Right ventricle myocardium superior (tissue), 1 donor: ENCODE measurements at regions of chr7 and their contacts with region 1.

Region 1: GRCh38 chr7:86939197-86939814 is 120.1 kb downstream of the ELAPOR2 start:
- DNase-seq: no peak
- ATAC-seq: peak; percentile 71

Region 2: GRCh38 chr7:86485827-86486226 is 453.5 kb before region 1 on chr7:
- intact Hi-C with region 1: no loop called
- DNase-seq: no peak
- ATAC-seq: no peak

Region 3: GRCh38 chr7:86968618-86969017 is 29.3 kb after region 1 on chr7:
- intact Hi-C with region 1: no loop called
- DNase-seq: no peak
- ATAC-seq: no peak

Region 4: DNA sequence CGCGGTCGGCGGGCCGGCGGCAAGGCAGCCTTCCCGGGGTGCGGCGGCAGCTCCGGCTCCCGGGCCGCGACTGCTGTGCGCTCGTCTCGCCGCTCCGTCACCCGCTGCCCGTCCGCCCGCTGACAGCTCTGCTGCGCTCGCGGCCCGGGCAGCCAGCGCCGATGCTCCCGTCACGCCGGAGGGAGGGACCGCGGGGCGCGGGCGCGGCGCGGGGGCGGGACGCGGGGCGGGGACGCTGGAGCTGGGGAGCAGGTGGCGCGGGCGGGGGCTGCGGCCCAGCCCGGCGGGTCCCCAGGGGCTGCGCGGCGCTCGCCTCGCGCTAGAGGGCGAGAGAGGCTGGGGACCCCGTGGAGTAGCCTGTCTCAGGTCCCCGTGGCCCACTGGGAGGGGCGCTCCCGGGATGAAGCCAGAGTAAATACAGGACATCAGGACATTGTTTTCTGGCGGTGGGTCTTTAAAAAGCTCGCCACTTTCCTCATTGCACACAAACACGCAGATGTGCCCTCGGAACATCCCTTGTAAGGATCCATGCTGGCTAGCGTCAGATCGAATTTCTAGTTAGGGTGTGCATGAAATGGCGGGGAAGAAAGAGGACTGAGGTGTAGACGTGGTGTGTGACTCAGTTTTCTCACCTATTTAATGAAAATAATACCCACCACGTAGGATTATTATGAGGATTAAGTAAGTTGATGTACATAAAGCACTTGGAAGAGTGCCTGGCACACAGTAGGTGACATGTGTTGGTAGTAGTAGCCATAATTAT is 120.4 kb after region 1 on chr7 and contains the start of gene ELAPOR2:
- intact Hi-C with region 1: loop called (anchors 10 kb)
- DNase-seq: peak; percentile 85
- ATAC-seq: peak; percentile 99
- total RNA-seq, gene ELAPOR2: 3.6 TPM

Region 5: GRCh38 chr7:87152107-87152844 is 213.0 kb after region 1 on chr7 and contains the start of gene DMTF1:
- intact Hi-C with region 1: loop called (anchors 5 kb)
- DNase-seq: peak; percentile 97
- ATAC-seq: peak; percentile 99
- total RNA-seq, gene DMTF1: 26.8 TPM

Region 6: GRCh38 chr7:87231256-87231655 is 291.9 kb after region 1 on chr7:
- intact Hi-C with region 1: loop called (anchors 5 kb)
- DNase-seq: peak; percentile 64
- ATAC-seq: peak; percentile 82

Region 7: DNA sequence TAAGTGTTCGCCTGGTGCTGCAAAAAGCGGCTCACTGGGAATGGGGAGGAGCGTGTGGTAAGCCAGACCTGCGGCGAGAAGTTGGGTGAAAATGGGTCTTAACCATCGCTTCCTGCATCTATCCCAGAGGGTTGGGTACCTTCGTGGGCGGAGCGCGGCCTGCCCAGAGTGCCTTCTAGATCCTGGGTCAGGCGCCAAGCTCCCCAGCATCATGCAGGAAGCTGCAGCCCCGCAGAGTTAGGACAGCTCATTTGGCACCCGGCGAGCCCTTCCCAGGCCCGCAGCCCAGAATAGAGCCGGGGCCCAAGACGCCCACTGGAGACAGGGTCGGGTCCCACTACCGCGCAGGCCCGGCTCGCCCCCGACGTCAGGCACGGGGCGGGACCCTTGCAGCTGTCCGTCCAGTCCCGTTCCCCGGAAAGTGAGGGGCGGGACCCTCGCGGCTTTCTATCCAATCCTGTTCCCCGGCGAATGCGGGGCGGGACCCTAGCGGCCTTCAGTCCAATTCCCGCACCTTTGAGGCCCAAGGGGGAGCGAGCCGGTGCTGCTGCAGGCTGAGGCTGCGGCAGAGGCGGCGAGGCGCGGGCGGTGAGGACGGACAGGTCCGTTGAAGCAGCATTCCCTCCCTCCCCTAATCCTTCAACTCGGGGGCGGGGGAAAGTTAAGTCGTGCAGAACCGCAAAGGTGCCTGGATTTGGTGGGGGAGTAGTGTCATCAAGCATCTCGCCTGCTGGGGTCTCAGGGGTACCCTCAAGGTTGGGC is 406.0 kb after region 1 on chr7 and contains the start of gene CROT:
- intact Hi-C with region 1: loop called (anchors 10 kb)
- DNase-seq: peak; percentile 99
- ATAC-seq: peak; percentile 100
- total RNA-seq, gene CROT: 6.7 TPM

Region 8: DNA sequence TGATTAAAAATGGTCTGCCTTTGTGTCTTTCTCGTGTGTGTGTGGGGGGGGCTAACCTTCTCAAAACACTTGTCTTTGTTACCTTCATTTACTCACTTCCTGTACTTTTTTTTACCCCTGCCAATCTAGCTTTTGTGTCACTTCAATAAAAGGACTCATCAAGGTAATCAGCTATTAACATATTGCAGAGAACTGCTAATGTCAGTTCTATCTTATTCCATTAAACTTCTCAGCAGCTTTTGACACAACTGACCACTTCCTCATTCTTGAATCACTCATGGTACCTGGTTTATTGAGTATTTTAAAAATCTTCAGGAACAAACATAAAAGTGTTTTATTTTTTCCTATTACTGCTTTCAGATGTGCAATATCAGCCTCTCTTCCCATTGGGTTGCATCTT is 877.1 kb after region 1 on chr7:
- intact Hi-C with region 1: no loop called
- DNase-seq: no peak
- ATAC-seq: no peak